ENCODE measurements at regions of chr17 and their contacts with region 1.

Region 1: DNA sequence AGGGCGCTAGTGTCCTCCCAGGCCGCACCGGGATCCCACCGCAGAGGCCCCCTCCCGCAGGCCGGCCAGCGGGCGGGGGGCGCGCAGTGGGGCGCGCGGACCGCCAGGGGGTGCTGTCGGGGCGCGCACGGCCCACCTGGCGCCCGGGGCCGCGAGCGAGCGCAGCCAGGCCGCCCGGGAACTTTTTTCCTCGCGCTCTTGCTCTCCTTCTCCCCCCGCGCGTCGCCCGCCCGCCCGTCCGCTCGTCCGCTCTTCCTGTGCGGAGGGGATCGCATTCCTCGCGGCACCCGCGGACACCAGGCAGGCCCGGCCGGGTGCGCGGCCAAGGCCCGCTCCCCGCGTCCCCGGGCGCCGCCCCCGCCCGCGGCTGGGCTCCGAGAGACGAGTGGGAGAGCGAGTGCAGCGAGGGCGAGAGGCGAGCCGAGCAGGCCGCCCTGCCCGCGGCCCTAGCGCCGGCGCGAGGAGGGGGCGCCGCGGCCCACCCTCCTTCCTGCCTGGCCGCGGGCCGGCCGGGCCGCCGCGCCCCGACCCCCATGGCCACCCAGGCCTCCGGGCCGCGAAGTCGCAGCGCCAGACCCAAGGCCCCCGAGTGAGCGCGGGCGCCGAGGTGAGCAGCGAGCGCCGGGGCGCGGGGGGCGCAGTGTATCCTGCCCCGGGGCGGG is at the start of gene RAI1:
- DNase-seq: peak; percentile 88
- ATAC-seq: peak; percentile 72
- total RNA-seq, gene RAI1: 31.9 TPM

Region 2: DNA sequence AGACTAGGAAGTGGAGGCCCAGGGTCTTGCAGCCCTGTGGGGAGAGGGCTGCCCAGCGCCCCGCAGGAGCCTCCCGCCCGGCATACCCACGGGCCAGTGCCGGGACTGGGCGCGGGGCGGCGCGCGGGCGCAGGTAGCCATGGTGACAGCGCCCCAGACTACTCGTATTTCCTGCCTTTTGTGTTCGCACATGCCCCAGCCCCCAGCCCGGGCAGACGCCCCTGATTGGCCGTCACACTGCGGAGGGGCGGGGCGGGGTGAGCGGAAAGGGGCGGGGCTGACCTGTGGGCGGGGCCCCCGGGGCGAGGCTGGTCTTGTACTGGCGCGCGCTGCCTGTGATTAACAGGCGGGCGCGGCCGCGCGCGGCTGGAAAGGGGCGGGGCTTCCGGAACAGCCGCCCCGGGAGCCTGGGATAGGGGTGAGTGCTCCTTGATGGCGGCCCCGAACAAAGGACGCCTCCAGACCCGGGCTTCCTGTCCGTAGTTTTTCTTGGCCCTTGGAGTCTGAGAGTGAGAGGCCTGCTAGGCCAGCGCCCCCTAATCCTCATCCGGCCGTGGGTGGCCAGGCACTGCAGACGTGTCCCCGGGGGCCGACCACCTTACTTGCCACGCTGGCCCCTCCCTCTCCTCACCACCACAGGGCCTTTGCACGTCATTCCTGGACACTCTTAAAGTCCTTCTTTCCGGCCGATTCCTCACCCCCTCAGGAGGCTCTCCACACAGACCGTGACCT is 70.9 kb after region 1 on chr17:
- intact Hi-C with region 1: loop called (anchors 2 kb)
- DNase-seq: peak; percentile 98
- ATAC-seq: peak; percentile 88

Region 3: GRCh38 chr17:17783116-17783824 is 102.0 kb after region 1 on chr17:
- intact Hi-C with region 1: loop called (anchors 2 kb)
- DNase-seq: no peak
- ATAC-seq: peak; percentile 37

Region 4: DNA sequence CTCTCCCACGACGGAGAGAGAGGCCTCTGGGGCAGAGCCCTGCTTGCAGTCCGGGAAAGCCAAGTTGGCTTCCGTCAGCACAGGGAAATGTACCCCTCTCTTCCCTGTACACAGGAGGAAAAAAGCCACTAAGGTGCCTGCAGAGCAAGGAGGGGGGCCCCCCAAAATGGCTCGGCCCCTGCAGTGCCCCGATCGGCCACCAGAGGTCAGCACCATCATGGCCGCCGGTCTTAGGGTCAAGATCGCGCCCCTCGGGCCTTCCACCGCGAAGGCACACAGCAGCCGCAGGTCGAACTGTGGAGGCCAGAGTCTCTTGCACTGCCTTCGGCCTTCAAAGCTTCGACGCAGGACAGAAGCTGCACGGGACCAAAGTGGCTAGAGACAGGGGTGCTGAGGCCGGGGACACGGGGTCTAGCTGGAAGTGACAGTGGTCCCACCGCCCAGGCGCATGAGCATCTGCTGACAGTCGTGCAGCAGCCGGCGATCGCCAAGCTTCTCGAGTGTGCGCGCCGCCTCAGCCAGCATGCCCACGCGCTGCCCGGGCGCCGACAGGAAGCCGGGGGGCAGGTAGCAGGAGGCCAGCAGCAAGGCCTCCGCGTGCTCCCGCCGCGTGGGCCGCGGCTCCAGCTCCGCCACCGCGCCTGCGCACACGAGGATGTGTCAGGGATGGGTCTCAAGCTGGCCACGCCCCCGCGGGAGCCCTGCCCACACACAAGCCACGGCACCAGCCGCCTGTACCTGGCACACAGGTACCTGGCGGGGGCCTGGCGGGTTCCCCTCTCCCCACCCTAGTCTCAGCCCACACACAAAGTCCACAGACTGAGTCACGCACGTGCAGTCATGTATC is 131.1 kb after region 1 on chr17:
- intact Hi-C with region 1: loop called (anchors 5 kb)
- DNase-seq: peak; percentile 88
- ATAC-seq: peak; percentile 51

Region 5: GRCh38 chr17:17859909-17860765 is 178.8 kb after region 1 on chr17:
- intact Hi-C with region 1: loop called (anchors 1 kb)
- DNase-seq: peak; percentile 85
- ATAC-seq: peak; percentile 95

Region 6: GRCh38 chr17:17919169-17920107 is 238.1 kb after region 1 on chr17:
- intact Hi-C with region 1: loop called (anchors 5 kb)
- DNase-seq: peak; percentile 72
- ATAC-seq: peak; percentile 61

Region 7: GRCh38 chr17:18033442-18034099 is 352.3 kb after region 1 on chr17:
- intact Hi-C with region 1: loop called (anchors 1 kb)
- DNase-seq: no peak
- ATAC-seq: peak; percentile 89

Measured in Right ventricle myocardium inferior (tissue), 1 donor.